Pancreas (tissue), 10 donors: ENCODE measurements at regions of chr12 and their contacts with region 1.

Region 1: GRCh38 chr12:93419388-93420034 is 22.2 kb downstream of the UBE2N start:
- DNase-seq: no peak
- ATAC-seq: peak; percentile 63 to 89 (median 84)
- H3K4me3 ChIP-seq: no peak overlapping the region
- H3K27ac ChIP-seq: no peak overlapping the region
- H3K4me1 ChIP-seq: peaks cover under 1 to 13% (median 12%) of the 10 kb centered on the region in 3 donors
- H3K27me3 ChIP-seq: no peaks in the 10 kb centered on the region
- CTCF ChIP-seq: peak; percentile 38 to 64 (median 48)

Region 2: GRCh38 chr12:92987362-92987761 is 432.1 kb before region 1 on chr12:
- intact Hi-C with region 1: loop called in 2 of 3 experiments (anchors 10 kb)
- DNase-seq: peak in 1 of 6 donors; percentile 36
- ATAC-seq: peak; percentile 66 to 94 (median 88)
- H3K4me3 ChIP-seq: peak overlapping the region in 1 of 4 donors; percentile 5
- H3K27ac ChIP-seq: peak overlapping the region in 3 of 4 donors; percentile 30 to 61 (median 59)
- H3K4me1 ChIP-seq: peaks cover 9 to 20% (median 20%) of the 10 kb centered on the region in 3 donors
- H3K27me3 ChIP-seq: no peaks in the 10 kb centered on the region
- CTCF ChIP-seq: peak in 3 of 4 donors; percentile 19 to 46 (median 42)